K562 (cell line): ENCODE measurements at regions of chr17 and their contacts with region 1.

Region 1: DNA sequence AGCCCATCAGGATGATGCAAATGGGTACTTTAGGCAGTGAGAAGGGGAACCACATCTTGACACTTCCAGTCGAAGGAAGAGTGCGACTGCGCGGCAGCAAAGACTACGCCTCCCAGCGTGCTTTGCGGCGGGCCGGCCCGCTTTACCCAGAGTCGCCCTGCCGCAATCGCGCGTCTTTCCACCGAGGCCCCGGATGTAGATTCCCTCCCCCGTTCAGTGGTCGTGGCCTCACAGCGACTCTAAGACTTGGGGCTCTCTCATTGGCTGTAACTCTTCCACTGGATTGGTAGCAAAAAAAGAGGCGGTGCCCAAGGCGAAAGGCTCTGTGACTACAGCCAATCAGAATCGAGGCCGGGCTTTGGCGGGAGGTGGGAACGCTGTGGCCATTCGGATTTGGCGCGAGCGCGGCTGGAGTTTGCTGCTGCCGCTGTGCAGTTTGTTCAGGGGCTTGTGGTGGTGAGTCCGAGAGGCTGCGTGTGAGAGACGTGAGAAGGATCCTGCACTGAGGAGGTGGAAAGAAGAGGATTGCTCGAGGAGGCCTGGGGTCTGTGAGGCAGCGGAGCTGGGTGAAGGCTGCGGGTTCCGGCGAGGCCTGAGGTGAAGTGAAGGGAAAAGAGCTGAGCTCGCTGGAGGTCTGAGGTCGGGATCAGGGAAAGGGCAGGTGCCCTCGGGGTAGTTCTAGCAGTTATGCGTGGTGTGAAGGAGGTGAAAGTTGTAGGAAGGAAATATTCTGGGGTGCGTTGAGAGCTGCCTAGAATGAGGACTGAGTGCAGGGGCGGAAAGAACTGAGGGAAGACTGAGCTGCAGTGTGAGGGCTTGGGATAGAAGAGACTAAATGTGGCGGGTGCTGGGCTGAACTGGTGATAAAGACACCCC is at the start of gene CDC6:
- DNase-seq: peak; percentile 98 to 99 (median 99)
- ATAC-seq: peak; percentile 98
- H3K4me3 ChIP-seq: peak within 1 kb of the TSS; percentile 89
- H3K27ac ChIP-seq: peak within 1 kb of the TSS; percentile 95
- H3K4me1 ChIP-seq: peaks cover 0 to 7% of the 10 kb centered on the region in 2 experiments; a peak in 2 of 5 replicates
- H3K27me3 ChIP-seq: no peaks in the 10 kb centered on the region
- CTCF ChIP-seq: no peak
- EP300 ChIP-seq: peak; percentile 31; the same call in 1 of the 2 replicates
- POLR2A ChIP-seq: peak; percentile 99
- RAD21 ChIP-seq: no peak
- polyA plus RNA-seq, gene CDC6: 29.6 to 55.0 TPM

Region 2: GRCh38 chr17:40021451-40021971 is 266.2 kb before region 1 on chr17:
- CTCF ChIA-PET with region 1: no interaction called
- POLR2A ChIA-PET with region 1: no interaction called
- in situ Hi-C with region 1: loop called (anchors 25 kb)
- intact Hi-C with region 1: no loop called
- DNase-seq: peak in 1 of 4 experiments; percentile 9
- ATAC-seq: no peak
- H3K4me3 ChIP-seq: no peak overlapping the region
- H3K27ac ChIP-seq: no peak overlapping the region
- H3K4me1 ChIP-seq: peaks cover 0 to 35% of the 10 kb centered on the region in 2 experiments; a peak in 3 of 5 replicates
- H3K27me3 ChIP-seq: no peaks in the 10 kb centered on the region
- CTCF ChIP-seq: no peak
- EP300 ChIP-seq: no peak
- POLR2A ChIP-seq: no peak
- RAD21 ChIP-seq: no peak

Region 3: DNA sequence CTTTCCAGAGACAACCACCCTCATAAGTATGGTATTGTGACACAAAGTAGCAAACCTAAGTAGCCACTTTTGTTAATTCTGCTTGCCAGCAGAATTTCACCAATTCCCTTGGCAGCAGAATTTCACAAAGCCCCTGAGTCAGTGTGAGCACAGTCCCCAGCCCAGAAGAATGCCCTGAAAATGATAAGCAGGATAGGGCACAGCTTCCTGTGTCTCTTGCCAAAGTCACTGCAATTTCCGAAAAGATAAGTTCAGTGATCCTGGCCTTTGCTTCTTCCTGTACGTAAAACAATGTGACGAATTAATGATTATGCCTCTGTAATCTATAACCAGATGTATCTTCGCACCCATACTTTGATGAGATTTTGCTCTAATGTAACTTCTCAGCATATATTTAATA is 84.6 kb before region 1 on chr17:
- CTCF ChIA-PET with region 1: interaction called, 19 read pairs
- POLR2A ChIA-PET with region 1: interaction called, 3 read pairs
- in situ Hi-C with region 1: no loop called
- intact Hi-C with region 1: loop called (anchors 1 kb)
- DNase-seq: no peak
- ATAC-seq: no peak
- H3K4me3 ChIP-seq: no peak overlapping the region
- H3K27ac ChIP-seq: no peak overlapping the region
- H3K4me1 ChIP-seq: no peaks in the 10 kb centered on the region; a peak in 1 of 5 replicates
- H3K27me3 ChIP-seq: no peaks in the 10 kb centered on the region
- CTCF ChIP-seq: no peak
- EP300 ChIP-seq: no peak
- POLR2A ChIP-seq: no peak
- RAD21 ChIP-seq: no peak

Region 4: DNA sequence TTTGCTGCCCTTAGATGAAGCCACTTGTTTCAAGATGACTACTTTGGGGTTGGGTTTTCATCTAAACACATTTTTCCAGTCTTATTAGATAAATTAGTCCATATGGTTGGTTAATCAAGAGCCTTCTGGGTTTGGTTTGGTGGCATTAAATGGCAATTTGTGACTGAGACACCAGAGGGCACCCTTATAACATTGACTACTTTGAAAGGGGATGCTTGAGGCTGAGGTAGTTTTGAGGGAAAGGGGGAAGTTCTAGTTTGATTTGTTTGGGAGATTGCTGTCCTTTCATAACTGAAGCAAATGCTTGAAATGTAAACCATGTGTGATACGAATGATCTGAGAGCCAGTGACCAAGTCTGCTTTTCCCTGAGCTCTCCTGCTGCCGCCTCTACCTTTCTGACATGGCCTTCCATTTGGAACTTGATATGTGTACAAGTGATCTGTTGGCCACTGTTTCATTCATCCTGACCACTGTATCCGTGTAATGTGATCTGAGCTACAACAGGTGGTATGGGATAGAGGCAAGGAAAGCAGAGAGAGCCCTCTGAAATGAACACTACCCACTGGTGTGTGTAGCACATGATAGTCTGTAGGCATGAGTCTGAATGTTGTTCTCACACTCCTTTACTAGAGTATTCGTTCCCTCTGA is 15.4 kb after region 1 on chr17:
- CTCF ChIA-PET with region 1: interaction called, 3 read pairs
- POLR2A ChIA-PET with region 1: interaction called, 16 read pairs
- in situ Hi-C with region 1: no loop called
- intact Hi-C with region 1: no loop called
- DNase-seq: peak in 3 of 4 experiments; percentile 36 to 63 (median 47)
- ATAC-seq: peak; percentile 48
- H3K4me3 ChIP-seq: no peak overlapping the region
- H3K27ac ChIP-seq: no peak overlapping the region
- H3K4me1 ChIP-seq: peaks cover 20 to 21% of the 10 kb centered on the region in 2 experiments
- H3K27me3 ChIP-seq: no peaks in the 10 kb centered on the region
- CTCF ChIP-seq: peak; percentile 63 to 81 (median 69)
- EP300 ChIP-seq: no peak
- POLR2A ChIP-seq: peak; percentile 22; the same call in 1 of the 2 replicates
- RAD21 ChIP-seq: peak; percentile 89 to 92

Region 5: GRCh38 chr17:40373324-40373723 is 85.6 kb after region 1 on chr17:
- CTCF ChIA-PET with region 1: no interaction called
- POLR2A ChIA-PET with region 1: no interaction called
- in situ Hi-C with region 1: no loop called
- intact Hi-C with region 1: no loop called
- DNase-seq: no peak
- ATAC-seq: no peak
- H3K4me3 ChIP-seq: no peak overlapping the region
- H3K27ac ChIP-seq: no peak overlapping the region
- H3K4me1 ChIP-seq: peaks cover 4 to 8% of the 10 kb centered on the region in 2 experiments; a peak in 3 of 5 replicates
- H3K27me3 ChIP-seq: no peaks in the 10 kb centered on the region
- CTCF ChIP-seq: no peak
- EP300 ChIP-seq: no peak
- POLR2A ChIP-seq: no peak
- RAD21 ChIP-seq: no peak